ENCODE measurements at regions of chr9 and their contacts with region 1.

Region 1: GRCh38 chr9:105708405-105708804 is 14.1 kb downstream of the TMEM38B start:
- ATAC-seq: no peak
- H3K4me3 ChIP-seq: no peak overlapping the region
- H3K27ac ChIP-seq: no peak overlapping the region
- H3K4me1 ChIP-seq: no peaks in the 10 kb centered on the region

Region 2: GRCh38 chr9:105483618-105484017 is 224.8 kb before region 1 on chr9:
- in situ Hi-C with region 1: no loop called
- ATAC-seq: no peak
- H3K4me3 ChIP-seq: no peak overlapping the region
- H3K27ac ChIP-seq: no peak overlapping the region
- H3K4me1 ChIP-seq: no peaks in the 10 kb centered on the region

Region 3: DNA sequence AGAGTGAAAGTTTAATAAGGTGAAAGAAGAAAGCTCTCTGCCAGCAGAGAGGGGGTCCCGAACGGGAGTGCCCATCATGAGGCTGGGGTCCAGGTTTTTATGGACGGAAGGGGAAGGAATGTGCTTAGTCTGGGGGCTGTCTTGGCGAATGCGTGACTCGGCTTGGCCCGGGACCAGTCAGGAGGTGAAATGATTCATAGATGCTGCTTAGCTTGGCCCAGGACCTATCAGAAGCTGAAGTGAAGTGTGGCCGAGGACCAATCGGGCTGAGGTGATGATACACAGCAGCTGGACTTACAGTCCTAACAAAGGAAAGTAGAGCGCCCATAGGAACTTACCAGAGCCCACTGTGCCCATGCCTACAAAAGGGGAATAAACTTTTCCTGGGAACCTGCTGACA is 154.4 kb before region 1 on chr9:
- in situ Hi-C with region 1: no loop called
- ATAC-seq: no peak
- H3K4me3 ChIP-seq: no peak overlapping the region
- H3K27ac ChIP-seq: no peak overlapping the region
- H3K4me1 ChIP-seq: peaks cover 4% of the 10 kb centered on the region in 2 donors

Region 4: GRCh38 chr9:105608721-105609598 is 99.4 kb before region 1 on chr9:
- in situ Hi-C with region 1: loop called in 1 of 9 experiments (anchors 25 kb)
- ATAC-seq: peak in 4 of 8 experiments; percentile 45 to 82 (median 73)
- H3K4me3 ChIP-seq: no peak overlapping the region
- H3K27ac ChIP-seq: no peak overlapping the region
- H3K4me1 ChIP-seq: no peaks in the 10 kb centered on the region

Region 5: GRCh38 chr9:106321394-106322180 is 613.2 kb after region 1 on chr9:
- in situ Hi-C with region 1: no loop called
- ATAC-seq: peak in 6 of 8 experiments; percentile 60 to 88 (median 86)
- H3K4me3 ChIP-seq: no peak overlapping the region
- H3K27ac ChIP-seq: peak overlapping the region; percentile 54 to 70
- H3K4me1 ChIP-seq: peaks cover 46 to 60% of the 10 kb centered on the region in 2 donors

Measured in motor neuron (in vitro differentiated cells).